ENCODE measurements at regions of chr17 and their contacts with region 1.

Region 1: DNA sequence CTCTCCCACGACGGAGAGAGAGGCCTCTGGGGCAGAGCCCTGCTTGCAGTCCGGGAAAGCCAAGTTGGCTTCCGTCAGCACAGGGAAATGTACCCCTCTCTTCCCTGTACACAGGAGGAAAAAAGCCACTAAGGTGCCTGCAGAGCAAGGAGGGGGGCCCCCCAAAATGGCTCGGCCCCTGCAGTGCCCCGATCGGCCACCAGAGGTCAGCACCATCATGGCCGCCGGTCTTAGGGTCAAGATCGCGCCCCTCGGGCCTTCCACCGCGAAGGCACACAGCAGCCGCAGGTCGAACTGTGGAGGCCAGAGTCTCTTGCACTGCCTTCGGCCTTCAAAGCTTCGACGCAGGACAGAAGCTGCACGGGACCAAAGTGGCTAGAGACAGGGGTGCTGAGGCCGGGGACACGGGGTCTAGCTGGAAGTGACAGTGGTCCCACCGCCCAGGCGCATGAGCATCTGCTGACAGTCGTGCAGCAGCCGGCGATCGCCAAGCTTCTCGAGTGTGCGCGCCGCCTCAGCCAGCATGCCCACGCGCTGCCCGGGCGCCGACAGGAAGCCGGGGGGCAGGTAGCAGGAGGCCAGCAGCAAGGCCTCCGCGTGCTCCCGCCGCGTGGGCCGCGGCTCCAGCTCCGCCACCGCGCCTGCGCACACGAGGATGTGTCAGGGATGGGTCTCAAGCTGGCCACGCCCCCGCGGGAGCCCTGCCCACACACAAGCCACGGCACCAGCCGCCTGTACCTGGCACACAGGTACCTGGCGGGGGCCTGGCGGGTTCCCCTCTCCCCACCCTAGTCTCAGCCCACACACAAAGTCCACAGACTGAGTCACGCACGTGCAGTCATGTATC is 24.4 kb downstream of the SREBF1 start:
- DNase-seq: peak; percentile 80 to 91 (median 87)
- H3K4me3 ChIP-seq: no peak overlapping the region
- H3K27ac ChIP-seq: peak overlapping the region; percentile 5 to 66
- H3K4me1 ChIP-seq: peaks cover 14% of the 10 kb centered on the region
- H3K27me3 ChIP-seq: no peaks in the 10 kb centered on the region
- CTCF ChIP-seq: peak; percentile 98 to 99 (median 99)
- EP300 ChIP-seq: no peak
- POLR2A ChIP-seq: no peak

Region 2: GRCh38 chr17:17356149-17356930 is 456.1 kb before region 1 on chr17:
- intact Hi-C with region 1: loop called in 1 of 4 experiments (anchors 10 kb)
- DNase-seq: peak; percentile 66 to 87 (median 78)
- H3K4me3 ChIP-seq: no peak overlapping the region
- H3K27ac ChIP-seq: no peak overlapping the region
- H3K4me1 ChIP-seq: no peaks in the 10 kb centered on the region
- H3K27me3 ChIP-seq: no peaks in the 10 kb centered on the region
- CTCF ChIP-seq: peak; percentile 90 to 97 (median 95)
- EP300 ChIP-seq: no peak
- POLR2A ChIP-seq: no peak

Region 3: GRCh38 chr17:17694169-17695081 is 118.0 kb before region 1 on chr17:
- intact Hi-C with region 1: loop called in 2 of 4 experiments (anchors 10 kb)
- DNase-seq: peak; percentile 74 to 88 (median 85)
- H3K4me3 ChIP-seq: peak overlapping the region; percentile 53
- H3K27ac ChIP-seq: peak overlapping the region; percentile 79 to 95
- H3K4me1 ChIP-seq: peaks cover 29% of the 10 kb centered on the region
- H3K27me3 ChIP-seq: no peaks in the 10 kb centered on the region
- CTCF ChIP-seq: no peak
- EP300 ChIP-seq: peak; percentile 72
- POLR2A ChIP-seq: peak; percentile 77

Region 4: DNA sequence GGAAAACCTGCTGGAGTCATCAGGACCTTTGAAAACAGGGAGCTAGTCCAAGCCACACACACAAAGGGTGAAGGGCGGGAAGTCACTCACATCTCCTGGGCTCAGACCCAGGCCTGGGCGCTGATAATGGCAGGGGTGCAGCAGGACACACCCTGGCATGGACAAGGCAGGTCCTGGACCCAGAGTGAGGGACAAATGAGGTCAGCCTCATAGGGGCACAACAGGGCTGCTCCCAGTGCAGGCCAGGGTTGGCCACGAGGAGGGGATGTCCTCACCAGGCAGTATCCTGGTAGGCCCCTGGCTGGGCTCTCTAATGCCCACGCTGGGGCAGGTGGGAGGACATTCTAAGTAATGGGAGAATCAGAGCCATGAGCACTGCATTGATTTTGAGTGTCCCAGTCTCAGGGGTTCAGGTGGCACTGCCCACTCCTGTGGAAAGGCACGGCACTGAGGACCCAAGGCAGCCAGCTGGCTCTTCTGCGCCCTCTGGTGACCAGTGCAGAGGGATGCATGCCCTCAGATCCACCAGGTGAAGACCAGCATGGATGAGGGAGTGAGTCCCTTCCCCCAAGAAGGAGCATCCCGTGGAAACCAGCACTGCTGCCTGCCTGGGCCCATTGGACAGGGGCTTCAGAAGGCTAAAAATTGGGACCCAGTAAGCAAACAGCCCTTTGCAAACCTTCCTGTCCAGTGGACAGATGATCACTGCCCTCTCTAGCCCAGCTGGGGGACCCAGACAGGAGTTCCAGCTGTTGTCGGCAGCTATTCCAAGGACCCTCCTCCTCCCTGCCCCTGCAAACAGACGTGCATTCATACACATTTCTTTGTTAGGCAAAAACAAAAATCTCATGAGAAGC is 47.7 kb after region 1 on chr17:
- intact Hi-C with region 1: loop called (anchors 2 to 5 kb)
- DNase-seq: peak; percentile 66 to 79 (median 77)
- H3K4me3 ChIP-seq: no peak overlapping the region
- H3K27ac ChIP-seq: no peak overlapping the region
- H3K4me1 ChIP-seq: peaks cover 4% of the 10 kb centered on the region
- H3K27me3 ChIP-seq: no peaks in the 10 kb centered on the region
- CTCF ChIP-seq: peak; percentile 93 to 96 (median 96)
- EP300 ChIP-seq: no peak
- POLR2A ChIP-seq: no peak

Region 5: GRCh38 chr17:17877529-17878358 is 65.3 kb after region 1 on chr17:
- intact Hi-C with region 1: no loop called
- DNase-seq: peak; percentile 77 to 89 (median 86)
- H3K4me3 ChIP-seq: no peak overlapping the region
- H3K27ac ChIP-seq: peak overlapping the region; percentile 58 to 88
- H3K4me1 ChIP-seq: peaks cover 21% of the 10 kb centered on the region
- H3K27me3 ChIP-seq: no peaks in the 10 kb centered on the region
- CTCF ChIP-seq: no peak
- EP300 ChIP-seq: no peak
- POLR2A ChIP-seq: no peak

Region 6: GRCh38 chr17:17919169-17920107 is 107.0 kb after region 1 on chr17:
- intact Hi-C with region 1: loop called in 1 of 4 experiments (anchors 5 kb)
- DNase-seq: peak; percentile 68 to 80 (median 72)
- H3K4me3 ChIP-seq: no peak overlapping the region
- H3K27ac ChIP-seq: no peak overlapping the region
- H3K4me1 ChIP-seq: peaks cover 11% of the 10 kb centered on the region
- H3K27me3 ChIP-seq: no peaks in the 10 kb centered on the region
- CTCF ChIP-seq: peak in 2 of 3 donors; percentile 54 to 56
- EP300 ChIP-seq: no peak
- POLR2A ChIP-seq: no peak

Region 7: DNA sequence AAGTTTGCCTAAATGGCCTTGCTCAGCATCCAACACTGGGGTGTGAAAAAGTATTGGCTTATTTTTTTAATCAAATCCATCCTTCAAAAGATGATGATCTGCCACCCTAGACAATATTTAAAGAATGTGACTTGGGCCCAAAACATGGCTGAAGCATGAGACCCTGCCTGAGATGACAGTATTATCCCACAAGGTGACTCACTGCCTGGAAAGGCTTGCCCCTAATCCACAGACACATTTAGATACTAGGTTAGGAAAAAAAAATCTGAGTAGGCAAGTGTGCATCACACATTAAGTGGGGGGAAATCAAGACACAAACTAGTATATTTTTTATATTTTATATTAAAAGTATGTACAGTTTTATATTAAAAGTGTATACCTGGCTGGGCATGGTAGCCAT is 121.3 kb after region 1 on chr17:
- intact Hi-C with region 1: no loop called
- DNase-seq: no peak
- H3K4me3 ChIP-seq: no peak overlapping the region
- H3K27ac ChIP-seq: no peak overlapping the region
- H3K4me1 ChIP-seq: peaks cover 6% of the 10 kb centered on the region
- H3K27me3 ChIP-seq: no peaks in the 10 kb centered on the region
- CTCF ChIP-seq: no peak
- EP300 ChIP-seq: no peak
- POLR2A ChIP-seq: no peak

Region 8: DNA sequence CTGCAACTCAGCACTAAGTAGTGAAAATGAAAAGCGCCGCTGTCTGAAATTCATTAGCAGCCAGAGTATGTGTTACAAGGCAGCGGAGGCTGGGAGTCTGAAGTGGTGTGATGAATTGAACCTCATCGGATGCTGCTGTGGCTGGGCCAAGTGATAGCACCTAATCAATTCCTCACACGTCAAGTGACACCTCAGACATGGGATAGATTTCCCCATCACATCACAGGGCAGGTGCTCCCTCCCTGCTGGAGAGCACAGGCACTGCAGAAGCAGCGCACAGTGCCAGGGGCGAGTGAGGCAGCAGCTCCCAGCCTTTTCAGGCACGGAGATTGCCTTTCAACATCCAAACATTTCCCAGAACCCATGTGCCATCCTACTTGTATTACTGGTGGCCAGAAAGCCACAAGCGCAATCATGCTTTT is 192.5 kb after region 1 on chr17:
- intact Hi-C with region 1: no loop called
- DNase-seq: no peak
- H3K4me3 ChIP-seq: no peak overlapping the region
- H3K27ac ChIP-seq: no peak overlapping the region
- H3K4me1 ChIP-seq: no peaks in the 10 kb centered on the region
- H3K27me3 ChIP-seq: no peaks in the 10 kb centered on the region
- CTCF ChIP-seq: no peak
- EP300 ChIP-seq: no peak
- POLR2A ChIP-seq: no peak

Region 9: GRCh38 chr17:18038861-18039534 is 226.6 kb after region 1 on chr17 and contains the starts of genes ATPAF2 and GID4:
- intact Hi-C with region 1: loop called in 1 of 4 experiments (anchors 10 kb)
- DNase-seq: peak; percentile 99 to 100 (median 100)
- H3K4me3 ChIP-seq: peak within 1 kb of the TSS; percentile 91
- H3K27ac ChIP-seq: peak within 1 kb of the TSS; percentile 61 to 68
- H3K4me1 ChIP-seq: peaks cover 7% of the 10 kb centered on the region
- H3K27me3 ChIP-seq: no peaks in the 10 kb centered on the region
- CTCF ChIP-seq: peak in 1 of 3 donors; percentile 24
- EP300 ChIP-seq: no peak
- POLR2A ChIP-seq: peak; percentile 18
- total RNA-seq, gene ATPAF2: 5.5 to 18.6 (median 15.5) TPM
- total RNA-seq, gene GID4: 6.0 to 13.2 (median 11.2) TPM

Measured in ovary (tissue), 10 donors.